WTC11 (cell line): ENCODE measurements at regions of chr6 and their contacts with region 1.

Region 1: GRCh38 chr6:33276864-33277662 is at the start of gene B3GALT4:
- DNase-seq: peak; percentile 89
- ATAC-seq: peak; percentile 74
- H3K4me3 Mint-ChIP-seq: peak within 1 kb of the TSS; percentile 96
- H3K27ac Mint-ChIP-seq: peak within 1 kb of the TSS; percentile 100
- H3K4me1 Mint-ChIP-seq: peaks cover 54% of the 10 kb centered on the region
- H3K27me3 Mint-ChIP-seq: no peaks in the 10 kb centered on the region
- CTCF ChIP-seq: peak; percentile 36
- total RNA-seq, gene B3GALT4: 3.2 to 5.0 TPM (median 4.1 TPM) in 3 replicates

Region 2: GRCh38 chr6:33299237-33299944 is 22.3 kb after region 1 on chr6:
- CTCF ChIA-PET with region 1: interaction called, 40 read pairs
- POLR2A ChIA-PET with region 1: interaction called, 19 read pairs
- DNase-seq: peak; percentile 87
- ATAC-seq: peak; percentile 54
- H3K4me3 Mint-ChIP-seq: peak overlapping the region; percentile 99
- H3K27ac Mint-ChIP-seq: peak overlapping the region; percentile 100
- H3K4me1 Mint-ChIP-seq: peaks cover 17% of the 10 kb centered on the region
- H3K27me3 Mint-ChIP-seq: no peaks in the 10 kb centered on the region
- CTCF ChIP-seq: peak; percentile 56

Region 3: DNA sequence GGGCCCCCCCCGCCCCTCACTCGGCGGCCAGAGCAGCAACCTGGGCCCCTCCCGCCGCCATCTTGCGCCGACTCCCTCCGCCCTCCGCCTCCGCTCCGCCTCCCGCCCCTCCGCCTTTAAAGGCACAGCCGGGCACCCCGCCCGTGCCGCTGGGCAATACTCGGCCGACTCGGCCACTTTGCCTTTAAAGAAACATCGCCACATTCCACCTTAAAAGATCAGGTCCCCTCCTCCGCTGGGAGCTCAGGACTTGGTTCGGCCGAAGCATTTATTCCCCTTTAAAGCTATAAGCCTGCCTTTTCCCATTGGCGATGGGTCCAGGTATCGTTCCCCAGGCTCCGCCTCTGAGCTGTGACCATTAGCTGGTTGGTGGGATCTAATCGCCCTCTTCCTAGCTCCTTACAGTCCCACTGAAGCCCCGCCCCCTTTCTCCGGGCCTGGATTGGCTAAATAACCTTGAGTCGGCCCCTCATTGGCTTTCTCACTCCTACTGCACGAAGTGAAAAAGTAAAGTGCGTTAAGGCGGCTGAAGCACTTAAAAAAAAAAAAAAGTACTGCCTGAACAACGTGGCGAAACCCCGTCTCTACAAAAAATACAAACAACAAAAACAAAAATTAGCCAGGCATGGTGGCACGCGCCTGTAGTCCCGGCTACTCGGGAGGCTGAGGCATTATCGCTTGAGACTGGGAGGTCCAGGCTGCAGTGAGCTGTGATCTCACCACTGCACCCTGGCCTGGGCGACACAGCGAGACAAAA is 40.8 kb after region 1 on chr6 and contains the start of gene ZBTB22:
- CTCF ChIA-PET with region 1: interaction called, 16 read pairs
- POLR2A ChIA-PET with region 1: interaction called, 8 read pairs
- DNase-seq: peak; percentile 99
- ATAC-seq: peak; percentile 81
- H3K4me3 Mint-ChIP-seq: peak within 1 kb of the TSS; percentile 97
- H3K27ac Mint-ChIP-seq: peak within 1 kb of the TSS; percentile 91
- H3K4me1 Mint-ChIP-seq: peaks cover 65% of the 10 kb centered on the region
- H3K27me3 Mint-ChIP-seq: no peaks in the 10 kb centered on the region; the same call in 1 of the 2 replicates
- CTCF ChIP-seq: no peak
- total RNA-seq, gene ZBTB22: 11.6 to 14.7 TPM (median 13.7 TPM) in 3 replicates

Region 4: DNA sequence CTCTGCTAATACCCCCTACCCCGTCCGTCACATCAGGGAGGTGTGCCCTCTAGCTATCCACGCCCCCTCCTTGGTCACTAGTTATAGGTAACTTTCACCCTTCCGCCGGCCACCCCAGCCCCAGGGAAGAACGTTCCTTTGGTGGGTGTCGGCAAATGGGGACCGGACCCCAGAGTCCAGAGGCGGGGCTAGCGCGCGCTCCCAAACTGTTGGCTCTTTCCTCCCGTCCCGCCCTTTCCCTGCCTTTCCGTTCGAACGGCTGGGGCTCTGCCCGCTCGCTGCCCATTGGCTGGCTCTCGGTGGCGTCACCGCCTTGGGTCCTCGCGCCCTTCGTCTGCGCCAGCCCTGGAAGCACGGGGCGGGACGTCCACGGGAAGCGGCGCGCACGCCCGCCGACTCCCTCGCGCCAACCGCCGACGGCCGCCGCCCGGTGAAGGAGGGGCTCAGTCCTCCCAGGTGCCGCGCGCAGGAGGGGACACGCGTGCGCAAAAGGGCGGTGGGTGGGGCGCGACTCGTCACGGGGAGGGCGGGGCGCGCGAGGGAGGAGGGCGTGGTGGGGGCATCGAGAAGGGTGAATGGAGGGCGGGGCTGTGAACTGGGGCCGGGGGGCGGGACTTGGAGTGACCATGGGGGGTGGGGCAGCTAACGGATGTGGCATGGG is 133.1 kb after region 1 on chr6:
- CTCF ChIA-PET with region 1: interaction called, 11 read pairs
- POLR2A ChIA-PET with region 1: no interaction called
- DNase-seq: peak; percentile 98
- ATAC-seq: peak; percentile 91
- H3K4me3 Mint-ChIP-seq: peak overlapping the region; percentile 83
- H3K27ac Mint-ChIP-seq: peak overlapping the region; percentile 98
- H3K4me1 Mint-ChIP-seq: peaks cover 21% of the 10 kb centered on the region
- H3K27me3 Mint-ChIP-seq: no peaks in the 10 kb centered on the region
- CTCF ChIP-seq: no peak

Region 5: GRCh38 chr6:33430991-33431879 is 154.2 kb after region 1 on chr6:
- CTCF ChIA-PET with region 1: interaction called, 12 read pairs
- POLR2A ChIA-PET with region 1: interaction called, 5 read pairs
- DNase-seq: peak; percentile 93
- ATAC-seq: peak; percentile 65
- H3K4me3 Mint-ChIP-seq: peak overlapping the region; percentile 71
- H3K27ac Mint-ChIP-seq: peak overlapping the region; percentile 95
- H3K4me1 Mint-ChIP-seq: peaks cover 61% of the 10 kb centered on the region
- H3K27me3 Mint-ChIP-seq: no peaks in the 10 kb centered on the region
- CTCF ChIP-seq: no peak

Region 6: GRCh38 chr6:33513213-33513612 is 236.2 kb after region 1 on chr6:
- CTCF ChIA-PET with region 1: no interaction called
- POLR2A ChIA-PET with region 1: no interaction called
- DNase-seq: no peak
- ATAC-seq: no peak
- H3K4me3 Mint-ChIP-seq: no peak overlapping the region
- H3K27ac Mint-ChIP-seq: no peak overlapping the region
- H3K4me1 Mint-ChIP-seq: peaks cover 16% of the 10 kb centered on the region
- H3K27me3 Mint-ChIP-seq: peaks cover 15% of the 10 kb centered on the region
- CTCF ChIP-seq: no peak